ENCODE measurements at regions of chr7 and their contacts with region 1.

Region 1: GRCh38 chr7:73547841-73548240 is 9.6 kb downstream of the BCL7B start:
- DNase-seq: no peak
- H3K4me3 ChIP-seq: no peak overlapping the region
- H3K27ac ChIP-seq: no peak overlapping the region
- H3K4me1 ChIP-seq: peaks cover 3% of the 10 kb centered on the region
- H3K27me3 ChIP-seq: no peaks in the 10 kb centered on the region
- CTCF ChIP-seq: no peak

Region 2: DNA sequence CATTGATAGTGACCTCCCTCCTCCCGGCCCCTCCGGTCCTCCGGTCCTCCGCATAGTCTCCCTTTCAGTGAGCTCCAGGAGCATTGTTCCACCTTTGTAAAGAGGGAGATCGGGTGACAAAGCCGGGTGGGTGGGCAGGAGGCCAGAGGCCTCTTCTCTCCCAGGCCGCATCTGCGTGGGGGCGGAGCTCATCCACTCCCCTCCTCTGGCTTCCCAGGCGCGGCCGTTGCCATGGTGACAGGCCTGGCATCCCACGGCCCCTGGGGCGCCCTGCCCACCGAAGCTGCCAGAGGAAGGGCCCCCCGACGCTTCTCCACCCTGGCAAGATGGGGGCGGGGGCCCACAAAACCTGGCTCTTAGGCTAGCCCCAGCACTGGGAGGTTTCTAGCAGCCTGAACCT is 118.6 kb before region 1 on chr7:
- intact Hi-C with region 1: no loop called
- DNase-seq: no peak
- H3K4me3 ChIP-seq: no peak overlapping the region
- H3K27ac ChIP-seq: no peak overlapping the region
- H3K4me1 ChIP-seq: no peaks in the 10 kb centered on the region
- H3K27me3 ChIP-seq: no peaks in the 10 kb centered on the region
- CTCF ChIP-seq: no peak

Region 3: DNA sequence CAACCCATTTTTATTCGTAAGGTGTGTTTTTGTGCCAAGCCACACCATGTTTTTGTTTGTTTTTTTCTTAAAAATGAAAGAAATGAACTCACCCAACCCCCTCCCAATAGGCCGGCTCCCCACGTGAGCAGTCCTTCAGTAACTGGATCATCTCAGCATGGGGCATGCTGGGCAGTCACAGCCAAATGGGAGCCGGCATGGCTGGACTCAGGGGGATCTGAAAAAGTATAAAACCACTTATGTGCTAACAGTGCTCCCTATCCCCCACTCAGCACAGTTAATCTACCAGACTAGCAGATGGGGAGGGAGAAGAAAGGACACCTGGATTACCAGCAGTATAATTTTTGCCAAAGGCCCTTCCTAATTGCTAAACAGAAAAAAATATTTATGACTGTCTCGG is 65.1 kb before region 1 on chr7:
- intact Hi-C with region 1: loop called (anchors 10 kb)
- DNase-seq: no peak
- H3K4me3 ChIP-seq: no peak overlapping the region
- H3K27ac ChIP-seq: no peak overlapping the region
- H3K4me1 ChIP-seq: no peaks in the 10 kb centered on the region
- H3K27me3 ChIP-seq: no peaks in the 10 kb centered on the region
- CTCF ChIP-seq: no peak

Measured in colonic mucosa (tissue), 4 donors.